GM12878 (cell line): ENCODE measurements at regions of chr15 and their contacts with region 1.

Region 1: GRCh38 chr15:78909791-78910228 is 35.0 kb downstream of the CTSH start:
- DNase-seq: peak; percentile 26
- ATAC-seq: peak; percentile 87
- H3K4me3 ChIP-seq: no peak overlapping the region
- H3K27ac ChIP-seq: no peak overlapping the region
- H3K4me1 ChIP-seq: peaks cover 10% of the 10 kb centered on the region; the same call in 1 of the 2 replicates
- H3K27me3 ChIP-seq: no peaks in the 10 kb centered on the region
- CTCF ChIP-seq: peak; percentile 60 to 70 (median 69); a peak in 5 of 6 replicates
- EP300 ChIP-seq: no peak
- POLR2A ChIP-seq: peak; percentile 19; the same call in 1 of the 2 replicates
- RAD21 ChIP-seq: peak; percentile 79

Region 2: DNA sequence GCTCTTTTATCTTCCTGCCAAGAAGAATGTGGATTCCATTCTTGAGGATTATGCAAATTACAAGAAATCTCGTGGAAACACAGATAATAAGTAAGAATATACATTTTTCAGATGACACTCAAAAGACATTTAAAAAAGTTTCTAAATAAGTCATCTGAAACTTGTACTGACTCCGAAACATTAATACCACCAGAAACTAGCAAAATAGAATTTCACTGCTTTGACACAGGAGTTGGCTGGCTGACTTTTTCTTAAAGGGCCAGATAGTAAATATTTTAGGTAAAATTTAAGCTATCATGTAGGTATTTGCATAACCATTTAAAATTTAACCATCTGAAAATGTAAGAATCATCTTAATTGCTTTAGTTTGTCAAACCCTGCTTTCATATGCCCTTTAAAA is 16.3 kb before region 1 on chr15:
- CTCF ChIA-PET with region 1: interaction called, 21 read pairs
- POLR2A ChIA-PET with region 1: no interaction called
- RAD21 ChIA-PET with region 1: interaction called, 4 read pairs
- SMC1A ChIA-PET with region 1: interaction called, 15 read pairs
- in situ Hi-C with region 1: no loop called
- intact Hi-C with region 1: no loop called
- DNase-seq: no peak
- ATAC-seq: peak; percentile 74
- H3K4me3 ChIP-seq: peak overlapping the region; percentile 2; the same call in 1 of the 2 replicates
- H3K27ac ChIP-seq: no peak overlapping the region
- H3K4me1 ChIP-seq: peaks cover 10% of the 10 kb centered on the region
- H3K27me3 ChIP-seq: no peaks in the 10 kb centered on the region
- CTCF ChIP-seq: no peak
- EP300 ChIP-seq: no peak
- POLR2A ChIP-seq: no peak
- RAD21 ChIP-seq: no peak

Region 3: DNA sequence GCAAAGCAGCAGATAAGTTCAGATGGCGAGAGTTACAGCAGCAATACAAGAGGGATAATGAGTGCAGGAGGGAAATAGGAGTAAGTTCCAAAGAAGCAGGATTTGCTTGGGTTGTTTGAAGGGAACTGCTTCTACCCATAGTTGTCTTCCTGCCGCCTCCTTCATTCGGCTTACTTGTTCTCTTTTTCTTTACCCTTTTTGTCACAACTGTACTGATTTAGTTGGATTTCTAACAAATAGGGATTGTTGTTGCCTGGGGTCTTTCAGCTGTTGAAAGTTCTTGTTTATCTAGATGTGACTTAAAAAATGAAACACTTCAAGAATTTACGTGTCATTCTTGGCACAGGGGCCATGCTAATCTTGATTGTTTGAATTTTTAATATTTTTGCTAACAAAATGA is 11.3 kb before region 1 on chr15:
- CTCF ChIA-PET with region 1: interaction called, 12 read pairs
- POLR2A ChIA-PET with region 1: no interaction called
- RAD21 ChIA-PET with region 1: no interaction called
- SMC1A ChIA-PET with region 1: interaction called, 6 read pairs
- in situ Hi-C with region 1: no loop called
- intact Hi-C with region 1: no loop called
- DNase-seq: no peak
- ATAC-seq: no peak
- H3K4me3 ChIP-seq: no peak overlapping the region
- H3K27ac ChIP-seq: no peak overlapping the region
- H3K4me1 ChIP-seq: no peaks in the 10 kb centered on the region
- H3K27me3 ChIP-seq: no peaks in the 10 kb centered on the region
- CTCF ChIP-seq: no peak
- EP300 ChIP-seq: no peak
- POLR2A ChIP-seq: no peak
- RAD21 ChIP-seq: no peak

Region 4: DNA sequence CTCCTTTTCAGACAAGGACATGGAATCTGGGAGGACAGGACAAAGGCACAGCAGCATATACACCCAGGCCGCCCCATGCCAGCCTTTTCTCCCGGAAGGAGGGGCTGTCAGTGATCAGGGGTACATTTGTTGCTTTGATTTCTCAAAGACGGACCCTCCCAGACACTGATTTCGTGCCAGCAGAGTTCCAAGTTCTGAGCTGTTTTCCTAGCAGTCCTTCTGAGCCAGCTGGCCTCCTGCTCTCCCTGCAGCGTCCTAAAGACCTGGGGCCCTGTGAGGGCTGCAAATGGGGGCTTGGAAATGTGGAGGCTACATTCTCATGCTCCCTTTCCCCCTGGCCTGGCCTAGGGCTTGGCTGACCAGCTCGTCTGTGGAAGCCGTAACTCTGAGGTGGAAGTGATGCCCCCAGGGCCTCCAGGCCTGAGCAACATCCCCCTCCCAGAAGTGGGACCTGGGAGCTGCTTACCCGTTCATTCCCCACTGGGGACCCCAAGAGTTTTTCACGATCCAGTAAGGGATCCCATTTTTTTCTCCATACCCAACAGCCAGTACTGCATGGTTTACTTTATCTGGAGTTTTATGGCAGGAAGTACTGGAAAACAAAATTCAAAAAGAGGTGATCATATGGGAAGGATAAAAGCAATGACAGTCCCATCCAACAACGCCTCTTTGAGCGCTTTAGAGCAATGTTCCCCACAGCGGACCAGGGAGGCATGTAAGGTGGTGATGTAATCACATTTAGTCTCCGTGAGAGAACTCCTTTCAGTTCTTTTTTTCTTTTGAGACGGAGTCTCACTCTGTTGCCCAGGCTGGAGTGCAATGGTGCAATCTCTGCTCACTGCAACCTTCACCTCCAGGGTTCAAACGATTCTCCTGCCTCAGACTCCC is 13.0 kb after region 1 on chr15:
- CTCF ChIA-PET with region 1: interaction called, 13 read pairs
- POLR2A ChIA-PET with region 1: interaction called, 5 read pairs
- RAD21 ChIA-PET with region 1: interaction called, 3 read pairs
- SMC1A ChIA-PET with region 1: interaction called, 13 read pairs
- in situ Hi-C with region 1: no loop called
- intact Hi-C with region 1: no loop called
- DNase-seq: no peak
- ATAC-seq: no peak
- H3K4me3 ChIP-seq: no peak overlapping the region
- H3K27ac ChIP-seq: no peak overlapping the region
- H3K4me1 ChIP-seq: no peaks in the 10 kb centered on the region; the same call in 1 of the 2 replicates
- H3K27me3 ChIP-seq: no peaks in the 10 kb centered on the region
- CTCF ChIP-seq: no peak
- EP300 ChIP-seq: no peak
- POLR2A ChIP-seq: peak; percentile 31; the same call in 1 of the 2 replicates
- RAD21 ChIP-seq: no peak

Region 5: GRCh38 chr15:78938658-78939488 is 29.1 kb after region 1 on chr15:
- CTCF ChIA-PET with region 1: interaction called, 6 read pairs
- POLR2A ChIA-PET with region 1: no interaction called
- RAD21 ChIA-PET with region 1: interaction called, 14 read pairs
- SMC1A ChIA-PET with region 1: interaction called, 5 read pairs
- in situ Hi-C with region 1: no loop called
- intact Hi-C with region 1: no loop called
- DNase-seq: peak; percentile 91
- ATAC-seq: peak; percentile 73
- H3K4me3 ChIP-seq: peak overlapping the region; percentile 60; the same call in 1 of the 2 replicates
- H3K27ac ChIP-seq: peak overlapping the region; percentile 91
- H3K4me1 ChIP-seq: peaks cover 28% of the 10 kb centered on the region
- H3K27me3 ChIP-seq: no peaks in the 10 kb centered on the region
- CTCF ChIP-seq: no peak
- EP300 ChIP-seq: peak; percentile 70 to 73; a peak in 3 of 4 replicates
- POLR2A ChIP-seq: no peak
- RAD21 ChIP-seq: peak; percentile 17; the same call in 1 of the 2 replicates

Region 6: DNA sequence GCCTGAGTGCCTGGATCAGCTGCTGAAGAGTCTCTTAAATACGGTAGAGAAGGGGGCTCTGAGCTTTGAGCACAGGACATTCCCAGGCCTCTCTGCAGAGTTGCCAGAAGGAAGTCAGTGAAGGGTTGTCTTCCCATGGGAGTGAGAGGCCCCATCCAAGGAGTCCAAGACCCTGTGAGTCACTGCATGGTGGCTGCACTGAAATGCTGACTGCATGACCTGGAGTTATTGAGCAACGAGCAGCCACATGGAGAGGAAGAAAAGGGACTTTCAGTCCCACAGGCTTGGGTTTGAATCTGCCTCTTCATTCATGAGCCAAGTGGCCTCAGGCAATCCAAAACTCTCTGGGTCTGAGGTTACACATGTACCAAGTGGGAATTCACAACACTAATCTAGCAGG is 250.4 kb after region 1 on chr15:
- CTCF ChIA-PET with region 1: no interaction called
- POLR2A ChIA-PET with region 1: no interaction called
- RAD21 ChIA-PET with region 1: no interaction called
- SMC1A ChIA-PET with region 1: no interaction called
- in situ Hi-C with region 1: no loop called
- intact Hi-C with region 1: no loop called
- DNase-seq: no peak
- ATAC-seq: no peak
- H3K4me3 ChIP-seq: no peak overlapping the region
- H3K27ac ChIP-seq: no peak overlapping the region
- H3K4me1 ChIP-seq: no peaks in the 10 kb centered on the region
- H3K27me3 ChIP-seq: no peaks in the 10 kb centered on the region
- CTCF ChIP-seq: no peak
- EP300 ChIP-seq: no peak
- POLR2A ChIP-seq: no peak
- RAD21 ChIP-seq: no peak

Region 7: GRCh38 chr15:79184465-79184892 is 274.7 kb after region 1 on chr15:
- CTCF ChIA-PET with region 1: interaction called, 117 read pairs
- POLR2A ChIA-PET with region 1: no interaction called
- RAD21 ChIA-PET with region 1: interaction called, 19 read pairs
- SMC1A ChIA-PET with region 1: interaction called, 34 read pairs
- in situ Hi-C with region 1: loop called (anchors 5 kb)
- intact Hi-C with region 1: loop called (anchors 1 kb)
- DNase-seq: peak; percentile 25
- ATAC-seq: peak; percentile 94
- H3K4me3 ChIP-seq: no peak overlapping the region
- H3K27ac ChIP-seq: no peak overlapping the region
- H3K4me1 ChIP-seq: no peaks in the 10 kb centered on the region
- H3K27me3 ChIP-seq: peaks cover 0 to 2% of the 10 kb centered on the region in 2 experiments; a peak in 1 of 4 replicates
- CTCF ChIP-seq: peak; percentile 94 to 97 (median 96)
- EP300 ChIP-seq: no peak
- POLR2A ChIP-seq: no peak
- RAD21 ChIP-seq: peak; percentile 97